ENCODE measurements at regions of chr1 and their contacts with region 1.

Region 1: GRCh38 chr1:60848583-60849188 is 233.7 kb upstream of the NFIA start:
- DNase-seq: no peak
- H3K4me3 ChIP-seq: no peak overlapping the region
- H3K27ac ChIP-seq: no peak overlapping the region
- H3K27me3 ChIP-seq: no peaks in the 10 kb centered on the region
- CTCF ChIP-seq: peak; percentile 63

Region 2: GRCh38 chr1:60731321-60731720 is 117.4 kb before region 1 on chr1:
- CTCF ChIA-PET with region 1: no interaction called
- POLR2A ChIA-PET with region 1: no interaction called
- DNase-seq: no peak
- H3K4me3 ChIP-seq: no peak overlapping the region
- H3K27ac ChIP-seq: no peak overlapping the region
- H3K27me3 ChIP-seq: no peaks in the 10 kb centered on the region
- CTCF ChIP-seq: no peak

Region 3: DNA sequence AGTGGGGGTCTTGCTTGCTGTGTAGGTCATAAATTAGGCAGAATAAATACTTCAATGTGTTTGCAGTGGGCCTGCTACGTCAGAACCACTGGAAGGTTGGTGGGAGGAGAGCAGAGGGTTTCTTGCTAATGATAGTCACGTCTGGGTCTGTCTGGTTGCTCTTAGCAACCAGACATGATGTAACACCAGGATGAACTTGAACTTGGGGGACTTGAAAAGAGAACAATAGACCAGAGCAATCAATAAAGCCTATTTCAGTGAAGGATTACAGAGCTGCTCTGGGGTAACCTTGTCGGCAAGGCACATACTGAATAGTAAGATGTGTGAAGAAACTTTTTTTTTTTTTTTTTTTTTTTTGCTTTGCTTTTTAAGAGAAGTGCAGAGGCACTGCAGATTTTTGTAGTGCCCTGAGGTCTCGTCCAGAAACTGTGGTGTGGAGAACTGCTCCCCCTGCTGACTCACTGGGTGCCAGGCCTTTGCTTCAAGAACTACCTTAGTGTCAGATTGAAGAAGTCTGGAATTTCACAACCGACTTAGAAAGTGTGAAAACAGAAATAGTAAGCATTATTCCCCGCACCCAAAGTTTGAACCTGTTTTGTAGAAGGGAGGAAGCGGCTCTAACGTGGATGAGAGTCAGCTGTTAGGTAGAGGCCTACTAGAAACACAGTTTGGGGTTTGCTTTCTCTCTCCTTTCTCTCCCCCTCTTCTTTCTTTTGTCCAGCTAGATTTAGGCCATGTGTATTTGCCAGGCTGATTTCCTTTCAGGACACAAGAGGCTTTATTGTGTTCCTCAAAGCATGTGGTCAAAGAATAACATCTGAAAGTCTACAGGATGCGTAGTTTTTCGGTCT is 604.6 kb after region 1 on chr1:
- CTCF ChIA-PET with region 1: interaction called, 18 read pairs
- POLR2A ChIA-PET with region 1: no interaction called
- DNase-seq: peak; percentile 71
- H3K4me3 ChIP-seq: no peak overlapping the region
- H3K27ac ChIP-seq: no peak overlapping the region
- H3K27me3 ChIP-seq: no peaks in the 10 kb centered on the region
- CTCF ChIP-seq: peak; percentile 93

Region 4: DNA sequence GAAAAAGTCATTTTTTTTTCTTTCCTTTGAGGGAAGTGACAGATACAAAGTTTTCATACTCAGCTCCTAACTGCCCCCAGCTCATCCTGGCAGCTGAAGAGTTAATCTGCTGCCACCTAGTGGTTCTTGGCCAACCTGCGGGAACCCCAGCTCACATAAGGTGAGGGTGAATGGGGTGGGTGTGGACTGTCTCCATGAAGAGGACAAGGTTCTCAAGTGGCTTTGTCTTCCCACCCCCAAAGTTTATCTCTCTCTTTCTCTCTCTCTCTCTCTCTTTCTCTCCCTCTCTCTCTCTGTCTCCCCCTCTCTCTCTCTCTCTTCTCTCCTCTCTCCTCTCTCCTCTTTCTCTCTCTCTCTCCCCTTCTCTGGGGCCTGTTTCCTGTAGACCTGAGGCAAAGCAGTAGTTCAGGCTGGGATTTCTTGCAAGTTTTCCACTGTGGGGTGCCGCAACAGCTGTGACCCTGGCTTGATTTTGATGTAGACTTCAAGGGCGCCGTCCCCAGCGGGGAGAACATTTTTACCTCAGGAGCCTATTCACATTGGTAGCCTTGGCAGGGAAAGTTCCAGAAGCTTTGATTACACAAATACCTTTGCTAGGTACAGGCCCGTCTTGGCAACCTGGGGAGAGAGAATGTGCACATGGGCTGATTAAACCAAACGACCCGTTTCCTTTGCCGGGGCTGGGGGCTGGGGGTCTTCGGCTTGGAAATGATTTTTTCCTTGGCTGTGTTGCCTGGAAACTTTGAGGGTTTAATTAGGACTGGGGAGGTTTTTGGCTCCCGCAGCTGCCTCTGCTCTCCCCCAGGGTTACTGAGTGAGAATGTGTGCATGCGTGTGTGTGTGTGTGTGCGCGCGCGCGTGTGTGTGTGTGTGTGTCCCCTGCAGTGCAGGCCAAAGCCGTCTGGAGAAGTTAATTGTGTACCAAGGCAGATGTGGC is 740.3 kb after region 1 on chr1:
- CTCF ChIA-PET with region 1: interaction called, 13 read pairs
- POLR2A ChIA-PET with region 1: no interaction called
- DNase-seq: peak; percentile 6
- H3K4me3 ChIP-seq: no peak overlapping the region
- H3K27ac ChIP-seq: no peak overlapping the region
- H3K27me3 ChIP-seq: peaks cover 2% of the 10 kb centered on the region
- CTCF ChIP-seq: peak; percentile 83